ENCODE measurements at regions of chr17 and their contacts with region 1.

Region 1: GRCh38 chr17:2244545-2245525 is 58.8 kb downstream of the SMG6 start:
- DNase-seq: peak; percentile 87
- H3K4me3 Mint-ChIP-seq: no peak overlapping the region
- H3K27ac Mint-ChIP-seq: peak overlapping the region; percentile 89
- H3K4me1 Mint-ChIP-seq: peaks cover 22% of the 10 kb centered on the region
- H3K27me3 Mint-ChIP-seq: no peaks in the 10 kb centered on the region
- CTCF ChIP-seq: peak; percentile 94

Region 2: GRCh38 chr17:1908699-1909309 is 336.0 kb before region 1 on chr17:
- CTCF ChIA-PET with region 1: interaction called, 13 read pairs
- POLR2A ChIA-PET with region 1: no interaction called
- intact Hi-C with region 1: loop called (anchors 1 kb)
- DNase-seq: peak; percentile 81
- H3K4me3 Mint-ChIP-seq: no peak overlapping the region
- H3K27ac Mint-ChIP-seq: no peak overlapping the region
- H3K4me1 Mint-ChIP-seq: no peaks in the 10 kb centered on the region
- H3K27me3 Mint-ChIP-seq: peaks cover 26% of the 10 kb centered on the region
- CTCF ChIP-seq: peak; percentile 73

Region 3: GRCh38 chr17:2048805-2049204 is 196.0 kb before region 1 on chr17:
- CTCF ChIA-PET with region 1: interaction called, 61 read pairs
- POLR2A ChIA-PET with region 1: interaction called, 4 read pairs
- intact Hi-C with region 1: loop called (anchors 1 kb)
- DNase-seq: no peak
- H3K4me3 Mint-ChIP-seq: peak overlapping the region; percentile 77
- H3K27ac Mint-ChIP-seq: no peak overlapping the region
- H3K4me1 Mint-ChIP-seq: peaks cover 23% of the 10 kb centered on the region
- H3K27me3 Mint-ChIP-seq: no peaks in the 10 kb centered on the region
- CTCF ChIP-seq: no peak

Region 4: DNA sequence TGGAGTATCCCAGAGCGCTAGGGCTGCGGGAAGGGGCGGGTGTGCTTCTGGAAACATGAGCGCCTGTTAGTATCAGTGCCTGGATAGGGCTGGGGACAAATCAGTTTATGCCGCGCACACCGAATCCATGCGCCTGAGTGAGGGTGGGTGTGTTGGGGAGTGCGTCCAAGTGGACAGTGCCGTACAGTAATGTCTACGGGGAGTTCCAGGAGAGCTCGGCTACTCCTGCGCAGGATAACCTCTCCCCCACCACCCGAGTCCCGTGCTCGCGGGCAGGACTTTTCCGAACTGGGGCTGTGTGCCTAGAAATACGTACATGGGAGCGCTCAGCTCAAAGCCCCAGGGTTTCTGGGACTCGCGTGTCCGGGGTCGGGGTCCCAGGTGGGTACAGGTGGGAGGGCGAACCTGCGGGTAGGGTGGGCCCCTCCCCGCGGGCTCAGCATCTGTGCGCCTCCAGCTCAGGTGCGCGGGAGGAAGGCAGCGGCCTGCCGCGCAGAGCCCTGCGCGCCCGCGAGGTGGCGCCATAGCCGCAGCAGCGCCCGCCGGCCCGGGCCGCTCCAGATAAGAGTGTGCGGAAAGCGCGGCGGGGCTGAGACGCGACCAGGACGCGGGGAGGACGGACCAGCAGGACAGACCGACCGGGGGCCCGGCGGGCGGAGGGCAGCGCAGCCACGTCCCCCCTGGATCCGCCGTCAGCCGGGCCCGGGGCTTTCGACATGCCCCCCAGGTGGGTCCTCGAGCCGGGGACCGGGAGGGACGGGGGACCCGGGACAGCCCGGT is 190.1 kb before region 1 on chr17 and contains the start of gene HIC1:
- CTCF ChIA-PET with region 1: interaction called, 61 read pairs
- POLR2A ChIA-PET with region 1: interaction called, 4 read pairs
- intact Hi-C with region 1: loop called (anchors 1 kb)
- DNase-seq: peak; percentile 53
- H3K4me3 Mint-ChIP-seq: peak within 1 kb of the TSS; percentile 48
- H3K27ac Mint-ChIP-seq: no peak within 1 kb of the TSS
- H3K4me1 Mint-ChIP-seq: peaks cover 12% of the 10 kb centered on the region
- H3K27me3 Mint-ChIP-seq: no peaks in the 10 kb centered on the region
- CTCF ChIP-seq: peak; percentile 93
- total RNA-seq, gene HIC1: 0.59 and 1.0 TPM in 2 replicates

Region 5: DNA sequence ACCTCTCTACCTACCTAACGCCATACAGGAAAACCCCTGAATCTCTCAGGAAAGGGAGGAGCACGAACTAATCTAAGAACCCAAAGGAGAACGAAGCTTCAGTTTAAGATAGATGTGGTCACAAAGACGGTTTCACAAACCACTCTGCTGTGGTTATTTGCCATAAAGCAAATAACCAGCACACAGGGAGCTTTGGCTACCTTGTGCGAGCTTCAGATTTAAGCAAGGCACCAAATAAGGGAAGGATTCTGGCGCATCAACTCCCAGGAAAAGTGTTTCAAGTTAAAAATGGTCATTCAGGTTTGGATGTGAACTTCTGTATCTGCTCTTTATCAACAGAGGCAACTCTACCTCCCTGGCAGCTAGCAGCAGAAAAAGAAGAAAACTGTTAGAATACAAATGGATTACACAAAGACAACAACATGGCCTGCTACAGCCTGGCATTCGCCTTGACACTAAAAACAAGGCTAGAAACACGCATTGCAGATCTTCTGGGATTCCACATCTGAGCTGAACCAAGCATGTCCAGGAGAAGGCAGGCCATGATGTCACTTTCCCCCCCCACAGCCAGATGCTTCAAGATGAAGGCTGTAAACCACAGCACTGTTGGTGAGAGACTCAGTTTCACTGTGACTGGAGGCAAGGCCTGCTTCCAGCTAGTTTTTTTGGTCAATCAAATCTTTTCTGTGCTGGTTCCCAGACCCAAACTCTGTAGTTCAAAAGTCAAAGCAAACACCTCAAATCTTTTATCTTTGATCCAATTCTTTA is 15.1 kb after region 1 on chr17:
- CTCF ChIA-PET with region 1: interaction called, 20 read pairs
- POLR2A ChIA-PET with region 1: interaction called, 4 read pairs
- intact Hi-C with region 1: no loop called
- DNase-seq: no peak
- H3K4me3 Mint-ChIP-seq: no peak overlapping the region
- H3K27ac Mint-ChIP-seq: no peak overlapping the region
- H3K4me1 Mint-ChIP-seq: peaks cover 20% of the 10 kb centered on the region
- H3K27me3 Mint-ChIP-seq: no peaks in the 10 kb centered on the region
- CTCF ChIP-seq: no peak

Region 6: DNA sequence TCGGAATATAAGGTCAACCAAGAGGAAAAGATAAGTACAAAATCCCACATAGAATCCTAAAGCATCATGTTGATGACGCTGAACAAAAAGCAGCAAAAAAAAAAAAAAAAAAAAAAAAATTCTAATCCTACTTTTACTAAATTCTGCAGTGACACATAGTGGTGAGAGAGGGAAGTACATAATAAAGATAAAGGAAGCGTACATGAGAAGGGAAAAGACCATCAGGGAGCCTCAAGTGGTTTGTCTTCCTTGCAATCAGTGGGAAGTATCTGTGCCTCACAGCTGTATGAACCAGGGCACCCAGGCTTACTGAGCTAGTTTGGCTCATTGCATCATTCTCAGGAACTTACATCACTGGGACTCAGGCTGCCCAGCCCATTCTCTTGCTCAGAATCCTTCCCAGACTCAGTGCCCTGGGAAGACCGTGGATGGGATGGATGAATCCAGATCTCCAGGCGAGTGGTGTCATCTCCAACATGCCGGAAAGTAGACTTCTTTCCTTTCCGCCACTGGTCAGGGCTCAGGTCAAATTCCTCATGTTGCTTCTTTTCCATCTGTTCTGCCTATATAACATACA is 37.5 kb after region 1 on chr17:
- CTCF ChIA-PET with region 1: interaction called, 17 read pairs
- POLR2A ChIA-PET with region 1: no interaction called
- intact Hi-C with region 1: no loop called
- DNase-seq: peak; percentile 61
- H3K4me3 Mint-ChIP-seq: no peak overlapping the region
- H3K27ac Mint-ChIP-seq: peak overlapping the region; percentile 37
- H3K4me1 Mint-ChIP-seq: peaks cover 4% of the 10 kb centered on the region
- H3K27me3 Mint-ChIP-seq: no peaks in the 10 kb centered on the region
- CTCF ChIP-seq: peak; percentile 24